ENCODE measurements at regions of chr5 and their contacts with region 1.

Region 1: GRCh38 chr5:32489791-32490582 is 45.4 kb upstream of the ZFR start:
- DNase-seq: peak; percentile 76
- ATAC-seq: peak; percentile 92
- H3K4me3 Mint-ChIP-seq: no peak overlapping the region
- H3K27ac Mint-ChIP-seq: no peak overlapping the region; the same call in 1 of the 2 replicates
- H3K4me1 Mint-ChIP-seq: peaks cover 5% of the 10 kb centered on the region
- H3K27me3 Mint-ChIP-seq: peaks cover 4% of the 10 kb centered on the region
- CTCF ChIP-seq: peak; percentile 62; the same call in 1 of the 2 replicates

Region 2: DNA sequence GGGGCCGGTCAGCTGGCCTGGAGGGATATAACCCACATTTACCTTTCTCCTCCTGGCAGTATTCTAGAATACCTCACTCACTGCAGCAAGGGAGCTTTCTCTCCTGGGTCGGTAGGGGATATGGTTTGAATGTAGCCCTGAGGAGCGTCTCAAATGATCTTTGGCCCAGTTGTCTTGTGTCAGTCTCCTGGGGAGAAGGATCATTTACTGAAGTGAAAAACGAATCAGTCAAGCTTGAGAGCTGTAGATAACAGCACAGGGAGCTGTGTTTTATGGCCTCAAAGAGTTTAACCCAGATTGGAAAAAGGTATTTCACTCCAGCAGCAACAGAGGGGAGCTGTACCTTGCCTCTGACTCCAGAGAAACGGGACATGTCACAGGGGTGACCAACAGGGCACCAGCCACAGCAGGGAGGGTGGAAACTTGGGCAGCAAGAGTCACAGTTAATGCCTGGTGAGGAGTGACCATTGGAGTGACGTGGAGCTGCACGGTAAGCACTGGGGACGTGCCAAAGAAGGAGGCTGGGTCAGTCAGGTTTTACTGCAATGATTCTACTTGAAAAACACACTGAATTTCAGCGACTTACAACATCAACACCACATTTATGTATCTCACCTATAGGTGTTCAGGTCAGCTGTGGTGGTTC is 15.7 kb before region 1 on chr5:
- CTCF ChIA-PET with region 1: interaction called, 15 read pairs
- POLR2A ChIA-PET with region 1: no interaction called
- DNase-seq: no peak
- ATAC-seq: peak; percentile 55; the same call in 1 of the 2 replicates
- H3K4me3 Mint-ChIP-seq: no peak overlapping the region
- H3K27ac Mint-ChIP-seq: 0 out of 2 replicates have a peak overlapping the region, but pooled peaks have one; percentile 34
- H3K4me1 Mint-ChIP-seq: peaks cover 19% of the 10 kb centered on the region
- H3K27me3 Mint-ChIP-seq: peaks cover 3% of the 10 kb centered on the region
- CTCF ChIP-seq: no peak

Region 3: GRCh38 chr5:32504989-32505596 is 15.1 kb after region 1 on chr5:
- CTCF ChIA-PET with region 1: interaction called, 46 read pairs
- POLR2A ChIA-PET with region 1: no interaction called
- DNase-seq: no peak
- ATAC-seq: peak; percentile 46
- H3K4me3 Mint-ChIP-seq: no peak overlapping the region
- H3K27ac Mint-ChIP-seq: no peak overlapping the region
- H3K4me1 Mint-ChIP-seq: peaks cover 59% of the 10 kb centered on the region
- H3K27me3 Mint-ChIP-seq: peaks cover 80% of the 10 kb centered on the region
- CTCF ChIP-seq: no peak

Region 4: GRCh38 chr5:32613050-32613672 is 123.2 kb after region 1 on chr5:
- CTCF ChIA-PET with region 1: interaction called, 16 read pairs
- POLR2A ChIA-PET with region 1: no interaction called
- DNase-seq: peak; percentile 88
- ATAC-seq: peak; percentile 87
- H3K4me3 Mint-ChIP-seq: no peak overlapping the region
- H3K27ac Mint-ChIP-seq: no peak overlapping the region
- H3K4me1 Mint-ChIP-seq: no peaks in the 10 kb centered on the region
- H3K27me3 Mint-ChIP-seq: no peaks in the 10 kb centered on the region
- CTCF ChIP-seq: peak; percentile 90

Region 5: GRCh38 chr5:32734827-32735378 is 244.9 kb after region 1 on chr5:
- CTCF ChIA-PET with region 1: no interaction called
- POLR2A ChIA-PET with region 1: no interaction called
- DNase-seq: no peak
- ATAC-seq: peak; percentile 52
- H3K4me3 Mint-ChIP-seq: no peak overlapping the region
- H3K27ac Mint-ChIP-seq: no peak overlapping the region
- H3K4me1 Mint-ChIP-seq: no peaks in the 10 kb centered on the region
- H3K27me3 Mint-ChIP-seq: 0 out of 2 replicates have a peak, but pooled peaks cover 2% of the 10 kb centered on the region
- CTCF ChIP-seq: no peak